B cell (primary cell): ENCODE measurements at regions of chrX and their contacts with region 1.

Region 1: DNA sequence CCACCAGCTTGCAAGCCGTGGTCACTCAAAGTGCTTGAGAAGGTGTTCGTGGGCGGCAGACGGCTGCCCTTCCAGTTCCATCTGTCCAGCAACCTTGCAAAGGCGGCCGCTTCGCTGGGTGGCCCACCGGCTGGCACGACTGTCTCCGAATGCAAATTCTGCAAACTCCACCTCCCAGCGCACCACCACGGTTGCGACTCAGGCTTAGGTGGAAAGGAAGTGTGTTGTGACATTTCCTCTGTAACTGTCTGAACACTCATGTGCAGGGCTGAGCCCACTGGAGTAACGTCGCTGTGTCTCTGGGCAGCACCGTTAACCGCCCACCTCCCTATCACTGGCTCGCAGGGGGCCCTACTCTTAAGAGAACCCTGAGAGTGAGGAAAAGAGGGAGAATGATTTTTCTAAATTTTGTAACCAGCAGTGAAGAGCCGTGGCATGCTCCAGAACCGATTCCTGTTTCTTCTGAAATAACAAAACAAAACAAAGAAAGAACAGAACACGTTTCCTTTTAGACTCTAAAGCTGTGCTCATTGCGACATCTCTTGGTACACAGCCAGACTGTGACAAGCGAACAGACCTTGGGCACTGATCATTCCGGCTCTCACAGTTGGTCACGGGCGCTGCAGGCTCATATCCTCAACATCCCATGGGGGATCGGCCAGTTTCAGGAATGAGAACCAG is at the start of gene P2RY8:
- DNase-seq: peak; percentile 88
- ATAC-seq: peak; percentile 77
- H3K4me3 ChIP-seq: peak within 1 kb of the TSS; percentile 86 to 97 (median 95)
- H3K4me3 Mint-ChIP-seq: peak within 1 kb of the TSS; percentile 98
- H3K27ac ChIP-seq: peak within 1 kb of the TSS; percentile 87 to 90
- H3K27ac Mint-ChIP-seq: peak within 1 kb of the TSS; percentile 99
- H3K4me1 ChIP-seq: peaks cover 7 to 29% of the 10 kb centered on the region in 2 donors
- H3K4me1 Mint-ChIP-seq: peaks cover 27% of the 10 kb centered on the region
- H3K27me3 ChIP-seq: no peaks in the 10 kb centered on the region
- H3K27me3 Mint-ChIP-seq: no peaks in the 10 kb centered on the region
- CTCF ChIP-seq: peak; percentile 28
- total RNA-seq, gene P2RY8: 140 and 142 TPM in 2 replicates

Region 2: GRCh38 chrX:1246816-1247215 is 290.4 kb before region 1 on chrX:
- CTCF ChIA-PET with region 1: no interaction called
- POLR2A ChIA-PET with region 1: no interaction called
- intact Hi-C with region 1: loop called (anchors 5 kb)
- DNase-seq: peak; percentile 84
- ATAC-seq: peak; percentile 64
- H3K4me3 ChIP-seq: no peak overlapping the region
- H3K4me3 Mint-ChIP-seq: no peak overlapping the region
- H3K27ac ChIP-seq: no peak overlapping the region
- H3K27ac Mint-ChIP-seq: peak overlapping the region; percentile 61
- H3K4me1 ChIP-seq: peaks cover 12 to 20% of the 10 kb centered on the region in 2 donors
- H3K4me1 Mint-ChIP-seq: peaks cover 17% of the 10 kb centered on the region
- H3K27me3 ChIP-seq: no peaks in the 10 kb centered on the region
- H3K27me3 Mint-ChIP-seq: no peaks in the 10 kb centered on the region
- CTCF ChIP-seq: peak; percentile 90

Region 3: GRCh38 chrX:1481636-1482529 is 55.3 kb before region 1 on chrX:
- CTCF ChIA-PET with region 1: no interaction called
- POLR2A ChIA-PET with region 1: no interaction called
- intact Hi-C with region 1: loop called (anchors 1 kb)
- DNase-seq: peak; percentile 88
- ATAC-seq: peak; percentile 75
- H3K4me3 ChIP-seq: peak overlapping the region in 4 of 5 experiments; percentile 19 to 45 (median 26)
- H3K4me3 Mint-ChIP-seq: peak overlapping the region; percentile 80
- H3K27ac ChIP-seq: peak overlapping the region; percentile 68 to 89
- H3K27ac Mint-ChIP-seq: peak overlapping the region; percentile 98
- H3K4me1 ChIP-seq: peaks cover 44 to 72% of the 10 kb centered on the region in 2 donors
- H3K4me1 Mint-ChIP-seq: peaks cover 74% of the 10 kb centered on the region
- H3K27me3 ChIP-seq: no peaks in the 10 kb centered on the region
- H3K27me3 Mint-ChIP-seq: no peaks in the 10 kb centered on the region
- CTCF ChIP-seq: no peak

Region 4: DNA sequence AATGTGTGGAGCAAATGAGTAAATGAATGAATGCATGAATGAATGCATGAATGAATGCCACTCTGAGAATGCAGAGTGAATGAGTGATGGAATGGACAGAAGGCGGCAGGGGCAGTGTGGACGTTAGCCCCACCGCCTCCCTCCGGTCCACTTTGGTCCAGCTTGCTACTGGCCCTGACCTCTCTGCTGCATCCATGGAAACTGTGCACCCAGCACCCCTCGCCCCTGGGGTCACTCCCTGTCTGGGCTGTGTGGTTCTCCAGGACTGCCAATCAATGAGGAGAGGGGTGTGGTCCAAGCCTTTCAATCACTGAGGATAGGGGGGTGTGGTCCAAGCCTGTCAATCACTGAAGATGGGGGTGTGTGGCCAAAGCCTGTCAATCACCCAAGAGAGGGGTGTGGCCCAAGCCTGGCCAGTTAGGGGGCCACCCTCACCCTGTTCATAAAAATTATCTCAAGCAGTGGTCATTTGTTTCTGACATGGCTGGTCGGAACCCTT is 45.3 kb before region 1 on chrX:
- CTCF ChIA-PET with region 1: no interaction called
- POLR2A ChIA-PET with region 1: no interaction called
- intact Hi-C with region 1: no loop called
- DNase-seq: peak; percentile 65
- ATAC-seq: peak; percentile 36
- H3K4me3 ChIP-seq: no peak overlapping the region
- H3K4me3 Mint-ChIP-seq: peak overlapping the region; percentile 84
- H3K27ac ChIP-seq: no peak overlapping the region
- H3K27ac Mint-ChIP-seq: peak overlapping the region; percentile 93
- H3K4me1 ChIP-seq: peaks cover 21 to 41% of the 10 kb centered on the region in 2 donors
- H3K4me1 Mint-ChIP-seq: peaks cover 61% of the 10 kb centered on the region
- H3K27me3 ChIP-seq: no peaks in the 10 kb centered on the region
- H3K27me3 Mint-ChIP-seq: no peaks in the 10 kb centered on the region
- CTCF ChIP-seq: no peak

Region 5: DNA sequence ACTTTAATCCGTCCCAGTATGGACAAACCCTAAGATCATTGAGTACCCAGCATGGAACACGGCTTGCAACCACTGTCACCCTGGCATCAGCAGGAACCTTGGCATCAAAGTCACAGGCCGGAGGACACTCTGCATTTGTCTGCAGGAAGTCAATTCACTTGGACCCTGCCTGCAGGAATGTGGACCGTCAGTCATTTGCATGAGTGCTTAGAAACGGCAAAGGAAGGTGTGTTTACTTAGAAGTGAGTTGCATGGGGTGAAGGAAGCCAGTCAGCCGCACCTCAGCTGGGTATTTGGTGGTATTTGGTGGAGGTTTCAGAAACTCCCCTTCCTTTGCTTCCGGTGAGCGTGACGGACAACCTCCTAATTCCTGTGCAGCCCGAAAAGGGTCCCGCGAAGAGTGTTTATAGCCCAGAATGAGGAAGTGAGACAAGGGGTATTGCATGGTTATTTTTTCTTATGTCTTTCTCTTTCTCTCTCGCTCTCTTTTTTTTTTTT is 15.7 kb before region 1 on chrX:
- CTCF ChIA-PET with region 1: no interaction called
- POLR2A ChIA-PET with region 1: no interaction called
- intact Hi-C with region 1: loop called (anchors 1 kb)
- DNase-seq: peak; percentile 97
- ATAC-seq: peak; percentile 91
- H3K4me3 ChIP-seq: peak overlapping the region in 4 of 5 experiments; percentile 21 to 64 (median 27)
- H3K4me3 Mint-ChIP-seq: peak overlapping the region; percentile 85
- H3K27ac ChIP-seq: peak overlapping the region; percentile 90 to 98
- H3K27ac Mint-ChIP-seq: peak overlapping the region; percentile 97
- H3K4me1 ChIP-seq: peaks cover 56 to 69% of the 10 kb centered on the region in 2 donors
- H3K4me1 Mint-ChIP-seq: peaks cover 54% of the 10 kb centered on the region
- H3K27me3 ChIP-seq: no peaks in the 10 kb centered on the region
- H3K27me3 Mint-ChIP-seq: no peaks in the 10 kb centered on the region
- CTCF ChIP-seq: no peak

Region 6: DNA sequence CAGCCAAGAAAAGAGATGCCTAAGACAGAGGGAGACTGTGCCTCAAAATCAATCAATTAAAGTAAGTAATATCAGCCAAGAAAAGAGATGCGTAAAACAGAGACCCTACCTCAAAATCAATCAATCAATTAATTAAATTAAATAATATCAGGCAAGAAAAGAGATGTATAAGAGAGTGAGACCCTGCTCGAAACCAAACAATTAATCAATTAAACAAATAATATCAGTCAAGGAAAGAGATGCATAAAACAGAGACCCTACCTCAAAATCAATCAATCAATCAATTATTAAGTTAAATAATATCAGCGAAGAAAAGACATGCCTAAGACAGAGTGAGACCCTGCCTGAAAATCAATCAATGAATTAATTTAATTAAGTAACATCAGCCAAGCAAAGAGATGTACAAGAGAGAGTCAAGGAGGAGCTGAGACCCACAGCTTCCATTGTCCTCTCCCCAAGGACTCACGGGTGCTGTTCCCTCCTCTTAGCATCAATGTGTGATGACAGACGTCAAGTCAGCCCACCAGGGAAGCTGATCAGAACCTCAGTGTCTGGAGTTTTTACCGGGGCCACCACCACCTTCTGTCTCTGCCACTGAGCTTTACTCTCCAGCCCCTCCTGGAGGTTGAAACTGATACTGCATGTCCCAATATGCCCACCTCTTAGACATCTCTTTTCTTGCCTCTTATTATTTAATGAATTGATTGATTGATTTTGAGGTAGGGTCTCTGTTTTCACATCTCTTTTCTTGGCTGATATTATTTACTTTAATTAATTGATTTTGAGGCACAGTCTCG is 43.8 kb after region 1 on chrX:
- CTCF ChIA-PET with region 1: no interaction called
- POLR2A ChIA-PET with region 1: no interaction called
- intact Hi-C with region 1: loop called (anchors 2 kb)
- DNase-seq: peak; percentile 77
- ATAC-seq: peak; percentile 78
- H3K4me3 ChIP-seq: no peak overlapping the region
- H3K4me3 Mint-ChIP-seq: no peak overlapping the region
- H3K27ac ChIP-seq: no peak overlapping the region
- H3K27ac Mint-ChIP-seq: peak overlapping the region; percentile 37
- H3K4me1 ChIP-seq: peaks cover 8 to 20% of the 10 kb centered on the region in 2 donors
- H3K4me1 Mint-ChIP-seq: peaks cover 25% of the 10 kb centered on the region
- H3K27me3 ChIP-seq: no peaks in the 10 kb centered on the region
- H3K27me3 Mint-ChIP-seq: no peaks in the 10 kb centered on the region
- CTCF ChIP-seq: peak; percentile 82

Region 7: GRCh38 chrX:1945879-1946278 is 408.7 kb after region 1 on chrX:
- CTCF ChIA-PET with region 1: no interaction called
- POLR2A ChIA-PET with region 1: no interaction called
- intact Hi-C with region 1: no loop called
- DNase-seq: no peak
- ATAC-seq: no peak
- H3K4me3 ChIP-seq: no peak overlapping the region
- H3K4me3 Mint-ChIP-seq: no peak overlapping the region
- H3K27ac ChIP-seq: no peak overlapping the region
- H3K27ac Mint-ChIP-seq: no peak overlapping the region
- H3K4me1 ChIP-seq: no peaks in the 10 kb centered on the region
- H3K4me1 Mint-ChIP-seq: no peaks in the 10 kb centered on the region
- H3K27me3 ChIP-seq: no peaks in the 10 kb centered on the region
- H3K27me3 Mint-ChIP-seq: no peaks in the 10 kb centered on the region
- CTCF ChIP-seq: no peak